ENCODE measurements at regions of chr19 and their contacts with region 1.

Region 1: GRCh38 chr19:38441657-38442348 is 8.3 kb downstream of the RYR1 start:
- DNase-seq: no peak
- H3K4me3 Mint-ChIP-seq: no peak overlapping the region
- H3K27ac Mint-ChIP-seq: no peak overlapping the region
- H3K4me1 Mint-ChIP-seq: no peaks in the 10 kb centered on the region
- H3K27me3 Mint-ChIP-seq: peaks cover 84% of the 10 kb centered on the region
- CTCF ChIP-seq: no peak

Region 2: GRCh38 chr19:38284422-38284821 is 157.4 kb before region 1 on chr19:
- CTCF ChIA-PET with region 1: interaction called, 12 read pairs
- intact Hi-C with region 1: no loop called
- DNase-seq: no peak
- H3K4me3 Mint-ChIP-seq: no peak overlapping the region
- H3K27ac Mint-ChIP-seq: no peak overlapping the region
- H3K4me1 Mint-ChIP-seq: peaks cover 36% of the 10 kb centered on the region
- H3K27me3 Mint-ChIP-seq: no peaks in the 10 kb centered on the region
- CTCF ChIP-seq: no peak

Region 3: DNA sequence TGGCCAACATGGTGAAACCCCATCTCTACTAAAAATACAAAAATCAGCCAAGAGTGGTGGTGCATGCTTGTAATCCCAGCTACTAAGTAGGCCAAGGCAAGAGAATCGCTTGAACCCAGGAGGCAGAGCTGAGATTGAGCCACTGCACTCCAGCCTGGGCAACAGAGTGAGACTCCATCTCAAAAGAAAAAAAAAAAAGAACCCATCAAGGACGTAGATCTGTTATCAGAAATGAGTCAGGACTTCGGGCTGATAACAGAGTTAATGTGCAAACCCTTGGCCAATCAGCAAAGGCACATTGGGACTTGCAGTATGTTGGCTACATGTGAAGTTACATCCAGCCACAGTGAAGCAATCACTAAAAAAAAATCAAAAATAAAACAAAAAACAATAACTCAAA is 342.4 kb after region 1 on chr19:
- CTCF ChIA-PET with region 1: no interaction called
- intact Hi-C with region 1: no loop called
- DNase-seq: peak; percentile 41
- H3K4me3 Mint-ChIP-seq: no peak overlapping the region
- H3K27ac Mint-ChIP-seq: no peak overlapping the region
- H3K4me1 Mint-ChIP-seq: peaks cover 24% of the 10 kb centered on the region
- H3K27me3 Mint-ChIP-seq: no peaks in the 10 kb centered on the region
- CTCF ChIP-seq: no peak